ENCODE measurements at regions of chr7 and their contacts with region 1.

Region 1: DNA sequence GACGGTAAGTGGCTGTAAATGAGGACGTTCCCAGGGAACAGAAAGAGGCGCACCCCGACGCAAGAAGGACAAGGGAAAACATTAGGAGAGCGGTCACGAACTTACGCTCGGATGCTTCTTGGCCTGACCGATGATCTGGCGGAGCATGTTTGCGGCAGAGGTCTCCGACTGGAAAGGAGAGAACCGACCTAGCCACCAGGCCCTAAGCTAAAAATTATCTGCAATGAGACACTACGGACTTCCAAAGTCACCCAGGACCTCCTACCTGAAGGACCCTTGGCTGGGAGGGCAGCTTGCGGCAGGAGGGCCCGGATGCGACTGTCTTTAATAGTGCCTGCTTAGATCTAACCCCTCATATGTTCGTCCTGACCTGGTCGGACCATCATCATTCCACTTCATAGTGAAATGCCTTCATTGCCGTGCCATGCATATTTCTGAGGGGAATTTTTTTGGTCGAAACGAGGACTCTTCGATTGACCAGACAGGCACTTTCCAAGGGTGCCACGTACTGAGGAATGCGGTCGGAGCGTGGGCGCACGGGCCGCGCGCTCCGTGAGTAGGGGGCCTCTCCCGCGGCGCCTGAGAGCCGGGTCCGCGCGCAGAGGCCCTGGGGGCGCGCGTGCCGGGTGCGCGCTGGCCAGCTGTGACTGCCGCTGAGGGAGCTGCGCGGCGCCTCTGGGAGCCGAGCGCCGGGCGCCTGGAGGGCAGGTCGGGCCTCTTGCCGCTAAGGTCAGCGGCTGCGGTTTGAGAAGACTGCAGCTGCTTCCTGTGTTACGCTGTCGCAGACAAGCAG is 33.6 kb upstream of the PHF14 start:
- DNase-seq: peak; percentile 96
- H3K4me3 ChIP-seq: peak overlapping the region; percentile 96
- H3K27ac ChIP-seq: peak overlapping the region; percentile 79
- H3K4me1 ChIP-seq: peaks cover 29% of the 10 kb centered on the region
- CTCF ChIP-seq: no peak

Region 2: GRCh38 chr7:10973061-10973944 is 33.2 kb after region 1 on chr7 and contains the start of gene PHF14:
- CTCF ChIA-PET with region 1: interaction called, 3 read pairs
- POLR2A ChIA-PET with region 1: interaction called, 29 read pairs
- intact Hi-C with region 1: loop called (anchors 1 kb)
- DNase-seq: peak; percentile 97
- H3K4me3 ChIP-seq: peak within 1 kb of the TSS; percentile 98
- H3K27ac ChIP-seq: peak within 1 kb of the TSS; percentile 67
- H3K4me1 ChIP-seq: peaks cover 33% of the 10 kb centered on the region
- CTCF ChIP-seq: no peak
- total RNA-seq, gene PHF14: 39.9 and 44.0 TPM in 2 replicates

Region 3: DNA sequence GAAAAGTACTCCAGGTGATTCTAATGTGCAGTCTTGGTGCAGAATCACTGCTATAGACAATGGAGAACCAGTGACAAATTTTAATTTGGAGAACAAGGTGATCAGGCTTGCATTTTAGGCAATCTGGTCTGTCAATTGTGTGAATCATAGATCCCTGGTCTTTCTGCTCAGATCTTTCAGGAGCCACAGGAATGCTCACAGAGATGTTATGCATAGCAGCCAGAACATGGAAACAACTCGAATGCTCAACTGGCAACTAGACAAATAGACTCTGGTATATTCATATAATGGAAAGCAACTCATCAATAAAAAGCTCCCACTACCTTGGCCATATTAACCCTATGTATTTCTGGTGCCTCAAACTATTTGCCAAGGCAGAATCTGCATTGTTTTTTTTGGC is 242.6 kb after region 1 on chr7:
- CTCF ChIA-PET with region 1: no interaction called
- POLR2A ChIA-PET with region 1: no interaction called
- intact Hi-C with region 1: no loop called
- DNase-seq: no peak
- H3K4me3 ChIP-seq: no peak overlapping the region
- H3K27ac ChIP-seq: no peak overlapping the region
- H3K4me1 ChIP-seq: no peaks in the 10 kb centered on the region
- CTCF ChIP-seq: no peak

Region 4: DNA sequence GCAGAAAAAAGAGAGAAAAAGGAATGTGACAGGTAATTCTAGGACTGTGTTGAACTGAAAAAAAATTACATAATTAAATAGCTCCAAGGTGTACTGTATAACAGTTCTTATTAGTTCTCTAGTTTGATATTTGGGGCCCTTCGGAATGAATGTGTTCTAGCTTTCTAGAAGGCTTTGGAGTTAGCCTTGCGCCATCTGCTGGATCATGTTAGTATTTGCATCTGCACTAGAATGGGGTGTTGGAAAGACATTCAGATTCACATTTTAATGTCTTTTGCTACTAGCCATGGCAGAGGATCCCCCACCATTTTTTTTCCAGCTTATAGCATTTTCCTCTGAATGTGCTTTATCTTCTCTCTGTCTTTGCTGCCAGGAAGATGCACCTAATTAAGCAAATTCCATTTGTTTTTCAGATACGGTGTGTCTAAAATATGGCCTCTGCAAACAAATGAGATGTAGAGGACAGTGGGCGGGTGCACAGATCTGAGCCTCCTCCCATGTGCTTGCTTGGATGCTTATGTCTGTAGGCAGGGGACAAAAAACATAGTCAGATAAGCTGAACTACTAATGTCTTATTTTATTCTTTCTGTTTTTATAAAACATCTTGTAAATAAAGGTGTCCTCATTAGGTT is 272.1 kb after region 1 on chr7:
- CTCF ChIA-PET with region 1: no interaction called
- POLR2A ChIA-PET with region 1: no interaction called
- intact Hi-C with region 1: loop called (anchors 5 kb)
- DNase-seq: peak; percentile 69
- H3K4me3 ChIP-seq: no peak overlapping the region
- H3K27ac ChIP-seq: no peak overlapping the region
- H3K4me1 ChIP-seq: no peaks in the 10 kb centered on the region
- CTCF ChIP-seq: peak; percentile 92

Measured in OCI-LY7 (cell line).